B cell (primary cell): ENCODE measurements at regions of chr9 and their contacts with region 1.

Region 1: GRCh38 chr9:5437254-5438216 is at the start of gene PLGRKT:
- DNase-seq: peak; percentile 94
- ATAC-seq: peak; percentile 87
- H3K4me3 ChIP-seq: peak within 1 kb of the TSS; percentile 60 to 96 (median 76)
- H3K4me3 Mint-ChIP-seq: peak within 1 kb of the TSS; percentile 95
- H3K27ac ChIP-seq: peak within 1 kb of the TSS; percentile 85 to 94
- H3K27ac Mint-ChIP-seq: peak within 1 kb of the TSS; percentile 98
- H3K4me1 ChIP-seq: peaks cover 22 to 23% of the 10 kb centered on the region in 2 donors
- H3K4me1 Mint-ChIP-seq: peaks cover 45% of the 10 kb centered on the region
- H3K27me3 ChIP-seq: no peaks in the 10 kb centered on the region
- H3K27me3 Mint-ChIP-seq: no peaks in the 10 kb centered on the region
- CTCF ChIP-seq: peak; percentile 17
- total RNA-seq, gene PLGRKT: 11.0 and 12.3 TPM in 2 replicates

Region 2: DNA sequence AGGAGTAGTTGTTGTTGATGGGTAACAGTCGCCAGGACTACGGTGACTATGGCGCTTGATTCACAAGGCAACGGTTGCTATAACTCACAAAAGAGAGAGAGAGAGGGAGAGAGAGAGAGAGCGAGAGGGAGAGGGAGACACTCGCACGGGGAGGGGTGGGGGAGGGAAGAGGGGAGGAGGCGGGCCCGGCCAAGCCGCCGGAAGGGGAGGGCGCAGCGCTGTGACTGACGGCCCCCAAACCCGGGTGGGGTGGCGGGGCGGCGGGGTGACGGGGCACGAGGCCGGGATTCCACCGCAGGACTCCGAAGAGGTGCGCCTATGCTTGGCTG is 1911.7 kb before region 1 on chr9 and contains the start of gene RFX3:
- CTCF ChIA-PET with region 1: no interaction called
- POLR2A ChIA-PET with region 1: no interaction called
- intact Hi-C with region 1: loop called (anchors 5 kb)
- DNase-seq: peak; percentile 95
- ATAC-seq: peak; percentile 67
- H3K4me3 ChIP-seq: peak within 1 kb of the TSS; percentile 84 to 99 (median 95)
- H3K4me3 Mint-ChIP-seq: peak within 1 kb of the TSS; percentile 100
- H3K27ac ChIP-seq: peak within 1 kb of the TSS; percentile 100
- H3K27ac Mint-ChIP-seq: peak within 1 kb of the TSS; percentile 100
- H3K4me1 ChIP-seq: peaks cover 17 to 35% of the 10 kb centered on the region in 2 donors
- H3K4me1 Mint-ChIP-seq: peaks cover 48% of the 10 kb centered on the region
- H3K27me3 ChIP-seq: no peaks in the 10 kb centered on the region
- H3K27me3 Mint-ChIP-seq: no peaks in the 10 kb centered on the region
- CTCF ChIP-seq: no peak
- total RNA-seq, gene RFX3: 37.2 and 39.1 TPM in 2 replicates

Region 3: DNA sequence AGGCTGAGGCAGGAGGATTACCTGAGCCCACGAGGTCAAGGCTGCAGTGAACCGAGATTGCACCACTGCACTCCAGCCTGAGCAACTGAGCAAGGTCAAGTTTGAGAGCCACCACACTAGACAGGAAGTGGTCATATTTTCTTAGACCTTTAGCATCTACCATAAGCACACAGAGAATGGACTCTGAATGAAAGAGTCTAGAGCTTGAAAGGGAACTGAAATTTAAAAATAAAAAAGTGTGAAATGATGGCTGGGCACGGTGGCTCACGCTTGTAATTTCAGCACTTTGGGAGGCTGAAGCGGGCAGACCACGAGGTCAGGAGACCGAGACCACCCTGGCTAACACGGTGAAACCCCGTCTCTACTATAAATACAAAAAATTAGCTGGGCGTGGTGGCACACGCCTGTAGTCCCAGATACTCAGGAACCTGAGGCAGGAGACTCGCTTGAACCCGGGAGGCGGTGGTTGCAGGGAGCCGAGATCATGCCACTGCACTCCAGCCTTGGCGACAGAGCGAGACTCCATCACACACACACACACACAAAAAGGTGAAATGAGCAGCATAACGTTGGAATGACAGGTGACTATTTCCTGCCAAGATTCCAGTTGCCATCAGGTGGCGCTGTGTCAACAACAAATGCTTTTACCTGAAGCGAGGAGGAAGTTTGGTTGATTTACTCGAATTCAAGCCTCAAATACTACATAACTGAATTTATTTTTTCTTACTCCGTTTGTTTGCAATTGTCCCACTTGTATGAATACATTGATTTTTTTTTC is 675.2 kb before region 1 on chr9:
- CTCF ChIA-PET with region 1: interaction called, 21 read pairs
- POLR2A ChIA-PET with region 1: no interaction called
- intact Hi-C with region 1: loop called (anchors 5 kb)
- DNase-seq: peak; percentile 87
- ATAC-seq: peak; percentile 73
- H3K4me3 ChIP-seq: peak overlapping the region; percentile 22 to 62 (median 56)
- H3K4me3 Mint-ChIP-seq: peak overlapping the region; percentile 82
- H3K27ac ChIP-seq: peak overlapping the region in 1 of 2 donors; percentile 28
- H3K27ac Mint-ChIP-seq: peak overlapping the region; percentile 17
- H3K4me1 ChIP-seq: peaks cover 10 to 20% of the 10 kb centered on the region in 2 donors
- H3K4me1 Mint-ChIP-seq: peaks cover 22% of the 10 kb centered on the region
- H3K27me3 ChIP-seq: no peaks in the 10 kb centered on the region
- H3K27me3 Mint-ChIP-seq: no peaks in the 10 kb centered on the region
- CTCF ChIP-seq: peak; percentile 89

Region 4: DNA sequence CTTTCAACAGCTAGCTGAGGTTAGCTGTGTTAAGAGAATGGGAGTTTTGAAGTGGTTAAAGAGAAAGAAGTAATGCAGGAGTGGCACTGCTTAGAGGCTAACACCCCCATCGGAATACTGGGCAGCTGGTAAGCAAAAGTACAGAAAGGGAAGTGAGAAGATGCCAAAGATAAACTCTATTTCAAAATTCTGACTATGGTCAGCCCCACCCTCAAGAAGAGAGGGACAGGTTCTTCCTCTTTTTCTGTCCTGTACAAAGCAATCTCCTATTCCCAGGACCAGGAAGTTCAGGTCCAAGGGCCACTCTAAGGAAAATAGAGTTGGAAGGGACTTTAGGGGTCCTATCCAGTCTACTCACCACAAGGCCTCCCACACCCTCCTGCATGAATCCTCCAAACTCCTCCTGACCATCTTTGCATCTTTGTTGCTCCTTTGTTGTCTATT is 498.4 kb before region 1 on chr9:
- CTCF ChIA-PET with region 1: no interaction called
- POLR2A ChIA-PET with region 1: no interaction called
- intact Hi-C with region 1: no loop called
- DNase-seq: peak; percentile 66
- ATAC-seq: peak; percentile 93
- H3K4me3 ChIP-seq: peak overlapping the region in 2 of 5 experiments; percentile 10 to 41
- H3K4me3 Mint-ChIP-seq: peak overlapping the region; percentile 72
- H3K27ac ChIP-seq: peak overlapping the region; percentile 24 to 67
- H3K27ac Mint-ChIP-seq: peak overlapping the region; percentile 84
- H3K4me1 ChIP-seq: peaks cover 41 to 44% of the 10 kb centered on the region in 2 donors
- H3K4me1 Mint-ChIP-seq: peaks cover 57% of the 10 kb centered on the region
- H3K27me3 ChIP-seq: no peaks in the 10 kb centered on the region
- H3K27me3 Mint-ChIP-seq: no peaks in the 10 kb centered on the region
- CTCF ChIP-seq: no peak

Region 5: DNA sequence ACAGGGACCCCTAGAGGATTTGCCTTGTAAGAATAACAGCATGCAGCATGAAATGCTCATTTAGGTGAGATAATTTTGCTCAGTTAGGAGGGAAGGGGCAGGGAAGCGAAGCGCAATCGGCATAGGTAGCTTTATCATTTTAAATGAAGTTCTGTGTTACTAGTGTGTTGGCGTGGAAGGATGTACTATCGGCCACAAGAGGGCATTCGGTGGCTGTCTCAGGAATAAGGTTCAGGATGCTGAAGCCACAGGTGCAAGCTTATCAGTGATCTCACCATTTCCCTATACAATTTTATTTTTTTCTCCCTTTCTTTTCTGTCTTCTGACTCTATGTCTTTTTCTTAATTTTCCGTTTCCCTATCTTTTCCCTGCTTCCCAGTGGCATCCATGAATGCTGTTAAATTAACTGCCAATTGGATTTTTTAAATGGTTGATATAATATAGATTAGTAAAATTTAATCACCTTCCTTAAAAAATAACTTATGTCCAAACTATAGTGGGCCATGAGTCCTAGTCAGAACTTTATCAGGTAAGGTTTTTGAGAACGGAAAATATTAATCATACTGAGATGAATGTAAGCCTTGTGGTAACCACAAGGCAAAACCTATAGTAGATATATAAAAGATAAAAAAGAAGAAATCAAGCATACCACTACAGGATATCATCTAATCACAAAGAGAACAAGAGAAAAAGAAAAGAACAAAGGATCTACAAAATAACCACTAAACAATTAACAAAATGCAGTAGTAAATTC is 250.9 kb before region 1 on chr9:
- CTCF ChIA-PET with region 1: interaction called, 107 read pairs
- POLR2A ChIA-PET with region 1: interaction called, 3 read pairs
- intact Hi-C with region 1: loop called (anchors 1 kb)
- DNase-seq: peak; percentile 74
- ATAC-seq: peak; percentile 79
- H3K4me3 ChIP-seq: no peak overlapping the region
- H3K4me3 Mint-ChIP-seq: no peak overlapping the region
- H3K27ac ChIP-seq: no peak overlapping the region
- H3K27ac Mint-ChIP-seq: no peak overlapping the region
- H3K4me1 ChIP-seq: no peaks in the 10 kb centered on the region
- H3K4me1 Mint-ChIP-seq: peaks cover 2% of the 10 kb centered on the region
- H3K27me3 ChIP-seq: no peaks in the 10 kb centered on the region
- H3K27me3 Mint-ChIP-seq: no peaks in the 10 kb centered on the region
- CTCF ChIP-seq: peak; percentile 78

Region 6: GRCh38 chr9:5402217-5402616 is 35.3 kb before region 1 on chr9:
- CTCF ChIA-PET with region 1: no interaction called
- POLR2A ChIA-PET with region 1: no interaction called
- intact Hi-C with region 1: no loop called
- DNase-seq: no peak
- ATAC-seq: no peak
- H3K4me3 ChIP-seq: no peak overlapping the region
- H3K4me3 Mint-ChIP-seq: no peak overlapping the region
- H3K27ac ChIP-seq: no peak overlapping the region
- H3K27ac Mint-ChIP-seq: no peak overlapping the region
- H3K4me1 ChIP-seq: peaks cover 0 to 5% of the 10 kb centered on the region in 2 donors
- H3K4me1 Mint-ChIP-seq: peaks cover 5% of the 10 kb centered on the region
- H3K27me3 ChIP-seq: no peaks in the 10 kb centered on the region
- H3K27me3 Mint-ChIP-seq: no peaks in the 10 kb centered on the region
- CTCF ChIP-seq: no peak

Region 7: GRCh38 chr9:5425006-5425628 is 12.4 kb before region 1 on chr9:
- CTCF ChIA-PET with region 1: interaction called, 12 read pairs
- POLR2A ChIA-PET with region 1: no interaction called
- intact Hi-C with region 1: no loop called
- DNase-seq: peak; percentile 51
- ATAC-seq: peak; percentile 24
- H3K4me3 ChIP-seq: no peak overlapping the region
- H3K4me3 Mint-ChIP-seq: no peak overlapping the region
- H3K27ac ChIP-seq: no peak overlapping the region
- H3K27ac Mint-ChIP-seq: no peak overlapping the region
- H3K4me1 ChIP-seq: no peaks in the 10 kb centered on the region
- H3K4me1 Mint-ChIP-seq: peaks cover 1% of the 10 kb centered on the region
- H3K27me3 ChIP-seq: no peaks in the 10 kb centered on the region
- H3K27me3 Mint-ChIP-seq: no peaks in the 10 kb centered on the region
- CTCF ChIP-seq: peak; percentile 76

Region 8: GRCh38 chr9:5593904-5594303 is 156.4 kb after region 1 on chr9:
- CTCF ChIA-PET with region 1: interaction called, 91 read pairs
- POLR2A ChIA-PET with region 1: interaction called, 6 read pairs
- intact Hi-C with region 1: loop called (anchors 1 kb)
- DNase-seq: peak; percentile 84
- ATAC-seq: peak; percentile 57
- H3K4me3 ChIP-seq: no peak overlapping the region
- H3K4me3 Mint-ChIP-seq: peak overlapping the region; percentile 50
- H3K27ac ChIP-seq: peak overlapping the region in 1 of 2 donors; percentile 40
- H3K27ac Mint-ChIP-seq: peak overlapping the region; percentile 69
- H3K4me1 ChIP-seq: peaks cover 41 to 44% of the 10 kb centered on the region in 2 donors
- H3K4me1 Mint-ChIP-seq: peaks cover 68% of the 10 kb centered on the region
- H3K27me3 ChIP-seq: no peaks in the 10 kb centered on the region
- H3K27me3 Mint-ChIP-seq: no peaks in the 10 kb centered on the region
- CTCF ChIP-seq: no peak

Region 9: GRCh38 chr9:6008169-6008979 is 570.8 kb after region 1 on chr9:
- CTCF ChIA-PET with region 1: no interaction called
- POLR2A ChIA-PET with region 1: interaction called, 3 read pairs
- intact Hi-C with region 1: loop called (anchors 5 kb)
- DNase-seq: peak; percentile 97
- ATAC-seq: peak; percentile 72
- H3K4me3 ChIP-seq: peak overlapping the region; percentile 43 to 89 (median 73)
- H3K4me3 Mint-ChIP-seq: peak overlapping the region; percentile 95
- H3K27ac ChIP-seq: peak overlapping the region; percentile 86 to 91
- H3K27ac Mint-ChIP-seq: peak overlapping the region; percentile 89
- H3K4me1 ChIP-seq: peaks cover 17 to 21% of the 10 kb centered on the region in 2 donors
- H3K4me1 Mint-ChIP-seq: peaks cover 49% of the 10 kb centered on the region
- H3K27me3 ChIP-seq: no peaks in the 10 kb centered on the region
- H3K27me3 Mint-ChIP-seq: no peaks in the 10 kb centered on the region
- CTCF ChIP-seq: no peak